Naive thymus-derived CD4-positive, alpha-beta T cell (primary cell): ENCODE measurements at regions of chr10 and their contacts with region 1.

Region 1: DNA sequence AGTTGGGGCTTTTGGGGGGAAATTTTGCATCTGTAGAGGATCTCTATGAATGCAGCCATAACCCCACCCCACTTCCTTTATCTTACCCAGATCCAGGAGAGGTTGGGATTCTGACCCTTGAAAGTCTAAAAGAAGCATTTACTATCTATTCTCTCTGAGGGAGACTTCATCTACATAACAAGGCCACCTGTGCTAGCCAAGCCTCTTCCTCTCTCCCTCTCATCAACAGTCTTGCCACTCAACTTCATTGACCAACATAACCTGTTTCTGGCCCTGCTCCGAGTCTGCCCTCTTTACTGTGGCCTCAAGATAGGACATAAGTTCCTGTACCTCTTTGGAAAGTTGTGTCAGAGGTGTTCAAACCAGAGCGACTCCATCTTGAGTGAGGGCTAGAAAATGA is 19.4 kb downstream of the TUBAL3 start:
- DNase-seq: no peak
- ATAC-seq: no peak
- H3K4me3 ChIP-seq: no peak overlapping the region
- H3K4me3 Mint-ChIP-seq: peak overlapping the region in 1 of 10 donors; percentile 13
- H3K27ac ChIP-seq: no peak overlapping the region
- H3K27ac Mint-ChIP-seq: no peak overlapping the region
- H3K4me1 ChIP-seq: no peaks in the 10 kb centered on the region
- H3K4me1 Mint-ChIP-seq: peaks cover 0 to 5% (median 0%) of the 10 kb centered on the region in 7 donors
- H3K27me3 ChIP-seq: no peaks in the 10 kb centered on the region
- H3K27me3 Mint-ChIP-seq: peaks cover 0 to 15% (median 5%) of the 10 kb centered on the region in 5 donors

Region 2: GRCh38 chr10:4902571-4903011 is 482.6 kb before region 1 on chr10:
- CTCF ChIA-PET with region 1: no interaction called
- POLR2A ChIA-PET with region 1: no interaction called
- intact Hi-C with region 1: no loop called
- DNase-seq: no peak
- ATAC-seq: no peak
- H3K4me3 ChIP-seq: no peak overlapping the region
- H3K4me3 Mint-ChIP-seq: peak overlapping the region in 1 of 10 donors; percentile 65
- H3K27ac ChIP-seq: no peak overlapping the region
- H3K27ac Mint-ChIP-seq: peak overlapping the region in 1 of 9 donors; percentile 71
- H3K4me1 ChIP-seq: no peaks in the 10 kb centered on the region
- H3K4me1 Mint-ChIP-seq: peaks cover 0 to 3% (median 0%) of the 10 kb centered on the region in 7 donors
- H3K27me3 ChIP-seq: no peaks in the 10 kb centered on the region
- H3K27me3 Mint-ChIP-seq: peaks cover 0 to 3% (median 0%) of the 10 kb centered on the region in 5 donors

Region 3: DNA sequence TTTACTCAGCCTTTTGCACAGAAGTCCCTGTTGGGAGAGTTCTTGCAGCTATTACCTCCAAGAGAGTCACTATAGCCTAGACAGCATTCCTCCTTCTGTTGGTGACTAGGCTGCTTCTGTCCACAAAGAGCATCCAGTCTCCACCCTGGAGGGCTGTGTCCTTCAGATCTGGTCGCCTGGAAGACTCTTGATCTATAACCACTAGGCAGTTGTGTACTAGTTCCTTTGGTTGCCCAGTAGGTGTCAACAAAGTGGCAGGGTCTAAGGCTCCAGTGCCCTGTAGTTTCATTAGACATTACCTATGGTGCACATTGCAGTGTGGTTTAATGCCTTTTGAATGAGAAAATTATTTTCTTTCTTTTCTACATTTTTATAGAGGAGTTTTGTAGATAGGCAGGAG is 370.3 kb before region 1 on chr10:
- CTCF ChIA-PET with region 1: no interaction called
- POLR2A ChIA-PET with region 1: no interaction called
- intact Hi-C with region 1: loop called in 1 of 2 experiments (anchors 1 kb)
- DNase-seq: peak in 1 of 9 donors; percentile 1
- ATAC-seq: no peak
- H3K4me3 ChIP-seq: no peak overlapping the region
- H3K4me3 Mint-ChIP-seq: no peak overlapping the region
- H3K27ac ChIP-seq: no peak overlapping the region
- H3K27ac Mint-ChIP-seq: no peak overlapping the region
- H3K4me1 ChIP-seq: no peaks in the 10 kb centered on the region
- H3K4me1 Mint-ChIP-seq: no peaks in the 10 kb centered on the region
- H3K27me3 ChIP-seq: no peaks in the 10 kb centered on the region
- H3K27me3 Mint-ChIP-seq: peaks cover 0 to 14% (median 4%) of the 10 kb centered on the region in 5 donors

Region 4: GRCh38 chr10:5094265-5095205 is 290.7 kb before region 1 on chr10 and contains the start of gene AKR1C3:
- CTCF ChIA-PET with region 1: interaction called, 3 read pairs
- POLR2A ChIA-PET with region 1: no interaction called
- intact Hi-C with region 1: loop called (anchors 1 to 2 kb)
- DNase-seq: peak in 6 of 9 donors; percentile 24 to 53 (median 36)
- ATAC-seq: peak; percentile 77
- H3K4me3 ChIP-seq: peak within 1 kb of the TSS; percentile 69
- H3K4me3 Mint-ChIP-seq: peak within 1 kb of the TSS; percentile 71 to 95 (median 91)
- H3K27ac ChIP-seq: no peak within 1 kb of the TSS
- H3K27ac Mint-ChIP-seq: peak within 1 kb of the TSS in 6 of 9 donors; percentile 35 to 90 (median 61)
- H3K4me1 ChIP-seq: no peaks in the 10 kb centered on the region
- H3K4me1 Mint-ChIP-seq: peaks cover 0 to 25% (median 15%) of the 10 kb centered on the region in 7 donors
- H3K27me3 ChIP-seq: no peaks in the 10 kb centered on the region
- H3K27me3 Mint-ChIP-seq: peaks cover 0 to 44% (median 13%) of the 10 kb centered on the region in 5 donors
- total RNA-seq, gene AKR1C3: 2.9 to 14.1 (median 5.8) TPM